K562 (cell line): ENCODE measurements at regions of chr1 and their contacts with region 1.

Region 1: DNA sequence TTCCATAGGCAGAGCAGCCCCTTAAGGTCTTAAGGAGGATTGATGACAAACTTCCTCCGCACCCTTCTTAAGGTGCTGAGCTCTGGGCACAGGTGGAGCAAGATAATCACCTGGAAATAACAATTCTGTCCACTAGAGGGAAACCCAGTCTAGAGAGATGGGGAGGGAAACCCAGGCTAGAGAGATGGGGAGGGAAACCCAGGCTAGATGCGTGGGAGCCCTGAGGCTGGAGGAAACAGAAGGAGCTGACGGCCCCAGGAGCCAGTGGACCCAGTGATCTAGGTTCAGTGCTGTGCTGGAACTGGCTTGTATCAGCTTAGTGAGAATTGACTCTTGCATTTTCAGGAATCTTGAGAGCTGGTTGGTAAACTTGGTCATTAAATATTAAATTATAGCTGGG is 17.8 kb upstream of the MYCL start:
- DNase-seq: peak; percentile 85 to 87 (median 86)
- ATAC-seq: peak; percentile 98
- H3K4me3 ChIP-seq: no peak overlapping the region
- H3K27ac ChIP-seq: no peak overlapping the region
- H3K4me1 ChIP-seq: peaks cover 0 to 5% of the 10 kb centered on the region in 2 experiments; a peak in 4 of 5 replicates
- H3K27me3 ChIP-seq: peaks cover 20 to 32% of the 10 kb centered on the region in 2 experiments; a peak in 4 of 5 replicates
- CTCF ChIP-seq: peak; percentile 86 to 93 (median 90)
- EP300 ChIP-seq: no peak
- POLR2A ChIP-seq: no peak
- RAD21 ChIP-seq: peak; percentile 93 to 94

Region 2: GRCh38 chr1:39816415-39817090 is 103.0 kb before region 1 on chr1:
- CTCF ChIA-PET with region 1: interaction called, 6 read pairs
- POLR2A ChIA-PET with region 1: no interaction called
- in situ Hi-C with region 1: no loop called
- intact Hi-C with region 1: loop called (anchors 5 kb)
- DNase-seq: peak; percentile 84 to 88 (median 86)
- ATAC-seq: peak; percentile 92
- H3K4me3 ChIP-seq: no peak overlapping the region
- H3K27ac ChIP-seq: no peak overlapping the region
- H3K4me1 ChIP-seq: peaks cover 9 to 11% of the 10 kb centered on the region in 2 experiments; a peak in 4 of 5 replicates
- H3K27me3 ChIP-seq: peaks cover 2 to 8% of the 10 kb centered on the region in 2 experiments; a peak in 2 of 5 replicates
- CTCF ChIP-seq: peak; percentile 87 to 94 (median 91)
- EP300 ChIP-seq: no peak
- POLR2A ChIP-seq: no peak
- RAD21 ChIP-seq: peak; percentile 95 to 99

Region 3: GRCh38 chr1:39973503-39974135 is 54.1 kb after region 1 on chr1:
- CTCF ChIA-PET with region 1: interaction called, 34 read pairs
- POLR2A ChIA-PET with region 1: interaction called, 5 read pairs
- in situ Hi-C with region 1: loop called (anchors 5 kb)
- intact Hi-C with region 1: loop called (anchors 1 kb)
- DNase-seq: peak; percentile 74 to 87 (median 82)
- ATAC-seq: peak; percentile 86
- H3K4me3 ChIP-seq: no peak overlapping the region
- H3K27ac ChIP-seq: no peak overlapping the region
- H3K4me1 ChIP-seq: peaks cover 4% of the 10 kb centered on the region in 2 experiments; a peak in 4 of 5 replicates
- H3K27me3 ChIP-seq: peaks cover 4 to 8% of the 10 kb centered on the region in 2 experiments; a peak in 2 of 5 replicates
- CTCF ChIP-seq: peak; percentile 96 to 99 (median 98)
- EP300 ChIP-seq: no peak
- POLR2A ChIP-seq: no peak
- RAD21 ChIP-seq: peak; percentile 97 to 99

Region 4: DNA sequence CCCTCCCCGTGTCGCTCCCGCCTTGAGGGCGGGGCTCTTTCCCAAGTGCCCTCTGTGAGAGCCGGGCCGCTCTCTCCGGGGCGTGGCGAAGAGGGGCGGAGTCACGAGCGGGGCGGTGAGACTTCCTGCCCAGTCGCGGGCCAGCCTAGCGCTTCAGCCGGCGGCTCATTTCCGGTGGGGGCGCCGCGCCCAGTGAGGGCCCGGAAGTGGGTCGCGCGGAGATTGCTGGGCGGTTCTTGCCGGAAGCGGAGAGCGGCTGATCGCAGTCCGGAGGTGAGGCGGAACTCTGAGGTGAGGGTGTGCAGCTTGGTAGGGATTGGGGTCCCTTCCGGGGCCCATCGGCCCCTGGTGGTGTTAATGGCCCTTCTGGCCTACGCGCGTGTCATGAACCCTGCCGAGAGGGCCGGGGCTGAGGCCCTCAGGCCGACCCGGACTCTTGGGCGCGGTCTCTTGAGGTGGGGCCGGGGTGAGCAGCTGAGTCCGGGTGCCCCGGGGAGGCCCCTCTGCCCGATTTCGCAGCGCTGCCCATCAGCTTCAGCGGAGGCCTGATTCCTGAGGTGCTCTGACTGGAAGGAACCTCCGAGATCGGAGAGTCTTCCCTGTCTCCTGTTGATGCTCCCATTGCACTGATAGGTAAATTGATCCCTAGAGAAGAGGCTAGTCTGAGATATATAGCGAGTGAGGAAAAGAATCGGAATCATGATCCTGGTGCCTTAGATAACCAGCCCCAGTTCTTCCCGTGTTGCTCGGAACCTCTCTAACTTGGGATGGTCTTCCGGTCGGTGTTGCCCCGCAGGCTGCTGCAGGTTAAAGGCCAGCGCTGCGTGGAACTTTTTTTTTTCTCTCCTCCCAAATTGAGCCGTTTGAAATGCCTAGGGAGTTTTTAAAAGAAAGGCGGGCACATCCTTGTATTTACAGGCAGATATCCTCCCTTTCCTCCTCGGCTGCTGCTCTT is 121.2 kb after region 1 on chr1 and contains the start of gene CAP1:
- CTCF ChIA-PET with region 1: no interaction called
- POLR2A ChIA-PET with region 1: interaction called, 12 read pairs
- in situ Hi-C with region 1: no loop called
- intact Hi-C with region 1: no loop called
- DNase-seq: peak; percentile 99 to 100 (median 99)
- ATAC-seq: peak; percentile 92
- H3K4me3 ChIP-seq: peak within 1 kb of the TSS; percentile 91
- H3K27ac ChIP-seq: peak within 1 kb of the TSS; percentile 99
- H3K4me1 ChIP-seq: peaks cover 39 to 60% of the 10 kb centered on the region in 2 experiments
- H3K27me3 ChIP-seq: no peaks in the 10 kb centered on the region
- CTCF ChIP-seq: peak in 1 of 3 experiments; percentile 20; a peak in 2 of 6 replicates
- EP300 ChIP-seq: no peak
- POLR2A ChIP-seq: no peak
- RAD21 ChIP-seq: no peak
- polyA plus RNA-seq, gene CAP1: 281 to 658 TPM